Caco-2 (cell line): ENCODE measurements at regions of chr12 and their contacts with region 1.

Region 1: DNA sequence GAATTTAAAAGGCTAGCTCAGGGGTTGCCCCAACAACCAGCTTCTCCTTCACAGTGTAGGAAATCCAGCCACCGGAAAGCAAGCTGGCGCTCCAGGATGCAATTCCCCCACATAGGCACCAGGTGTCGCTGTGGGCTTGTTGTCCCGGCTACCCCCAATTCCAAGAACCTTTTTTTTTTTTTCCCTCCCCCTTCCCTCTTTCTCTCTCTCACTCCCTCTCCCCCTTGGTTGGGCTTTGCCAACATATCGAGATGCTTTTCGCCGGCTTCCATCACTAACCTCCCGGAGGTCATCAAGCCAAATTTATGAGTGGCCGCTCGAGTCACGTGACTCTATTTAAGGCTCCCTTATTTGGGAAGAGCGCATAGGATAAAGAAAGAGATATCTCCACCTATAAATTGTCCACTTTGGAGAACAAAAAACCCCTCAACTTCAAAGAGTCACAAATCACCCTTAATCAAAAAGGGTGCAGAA is at the start of gene HOXC5:
- DNase-seq: peak; percentile 83 to 86
- H3K4me3 ChIP-seq: peak within 1 kb of the TSS; percentile 52
- H3K4me3 Mint-ChIP-seq: peak within 1 kb of the TSS; percentile 89
- H3K27ac Mint-ChIP-seq: peak within 1 kb of the TSS; percentile 90
- H3K4me1 ChIP-seq: peaks cover 9% of the 10 kb centered on the region
- H3K4me1 Mint-ChIP-seq: peaks cover 10% of the 10 kb centered on the region
- H3K27me3 ChIP-seq: no peaks in the 10 kb centered on the region
- H3K27me3 Mint-ChIP-seq: no peaks in the 10 kb centered on the region
- CTCF ChIP-seq: peak; percentile 96 to 97
- total RNA-seq, gene HOXC5: 3.4 and 3.6 TPM in 2 replicates

Region 2: DNA sequence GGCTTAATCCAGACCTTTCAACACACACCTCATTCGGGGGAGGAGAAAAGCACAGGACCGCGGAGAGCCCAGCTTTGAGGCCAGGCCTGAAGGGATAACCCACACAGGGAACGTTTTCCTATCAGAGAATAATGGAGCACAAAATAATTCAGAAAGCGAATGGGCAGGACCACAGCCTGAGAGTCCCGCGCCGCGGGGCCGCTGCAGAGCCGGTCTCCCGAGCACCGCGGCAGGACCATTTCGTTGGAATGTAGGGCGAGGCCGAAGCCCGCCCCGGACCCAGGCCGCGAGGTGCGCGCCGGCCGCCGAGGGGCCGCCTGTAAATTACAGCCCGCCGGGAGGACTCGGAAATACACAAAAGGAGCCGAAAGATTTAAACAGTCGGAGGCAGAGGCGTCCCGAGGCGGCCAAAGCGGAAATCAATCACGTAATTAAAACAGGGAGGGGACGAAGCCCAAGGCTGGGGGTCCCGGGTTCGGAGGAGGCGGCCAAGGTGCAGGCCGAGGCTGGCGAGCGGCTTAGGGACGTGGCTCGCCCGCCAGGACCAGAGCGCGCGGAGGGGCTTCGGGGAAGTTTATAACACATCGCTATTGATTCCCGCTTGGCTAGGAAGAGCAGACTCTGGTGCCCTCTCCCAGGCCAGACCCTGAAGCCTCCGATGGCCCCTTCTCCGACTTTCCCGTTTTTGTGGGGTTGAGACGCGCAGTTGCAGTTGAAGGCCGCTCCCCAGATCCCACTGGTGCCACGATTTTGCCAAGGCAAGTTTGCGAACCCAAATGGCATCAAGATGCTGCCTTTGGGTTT is 14.7 kb after region 1 on chr12:
- CTCF ChIA-PET with region 1: no interaction called
- POLR2A ChIA-PET with region 1: no interaction called
- intact Hi-C with region 1: no loop called
- DNase-seq: no peak
- H3K4me3 ChIP-seq: no peak overlapping the region
- H3K4me3 Mint-ChIP-seq: peak overlapping the region; percentile 55
- H3K27ac Mint-ChIP-seq: no peak overlapping the region
- H3K4me1 ChIP-seq: no peaks in the 10 kb centered on the region; the same call in none of the 2 replicates
- H3K4me1 Mint-ChIP-seq: peaks cover 29% of the 10 kb centered on the region
- H3K27me3 ChIP-seq: no peaks in the 10 kb centered on the region
- H3K27me3 Mint-ChIP-seq: no peaks in the 10 kb centered on the region
- CTCF ChIP-seq: no peak

Region 3: DNA sequence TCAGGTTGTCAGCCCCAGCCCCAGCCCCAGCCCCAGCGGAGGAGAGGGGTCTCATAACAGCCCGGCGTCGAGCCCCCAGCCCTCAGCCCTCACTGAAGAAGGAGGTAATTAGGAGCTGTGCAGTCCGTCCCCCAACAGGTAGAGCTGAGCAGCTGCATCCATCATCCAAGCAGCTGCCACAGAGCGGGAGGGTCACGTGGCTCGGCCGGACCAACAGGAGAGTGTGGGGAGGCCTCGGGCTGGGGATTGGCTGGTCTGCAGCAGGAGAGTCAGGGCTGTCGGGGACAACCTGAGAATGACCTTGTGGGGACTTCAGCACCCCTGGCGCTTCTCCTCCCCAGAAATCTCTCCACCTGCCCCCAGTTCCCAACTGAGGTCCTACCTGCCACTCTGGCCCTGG is 126.5 kb after region 1 on chr12:
- CTCF ChIA-PET with region 1: interaction called, 10 read pairs
- POLR2A ChIA-PET with region 1: no interaction called
- intact Hi-C with region 1: no loop called
- DNase-seq: peak; percentile 81 to 86
- H3K4me3 ChIP-seq: no peak overlapping the region
- H3K4me3 Mint-ChIP-seq: peak overlapping the region; percentile 44
- H3K27ac Mint-ChIP-seq: peak overlapping the region; percentile 37
- H3K4me1 ChIP-seq: peaks cover 18% of the 10 kb centered on the region
- H3K4me1 Mint-ChIP-seq: peaks cover 11% of the 10 kb centered on the region
- H3K27me3 ChIP-seq: no peaks in the 10 kb centered on the region
- H3K27me3 Mint-ChIP-seq: no peaks in the 10 kb centered on the region
- CTCF ChIP-seq: peak in 1 of 2 experiments; percentile 39

Region 4: DNA sequence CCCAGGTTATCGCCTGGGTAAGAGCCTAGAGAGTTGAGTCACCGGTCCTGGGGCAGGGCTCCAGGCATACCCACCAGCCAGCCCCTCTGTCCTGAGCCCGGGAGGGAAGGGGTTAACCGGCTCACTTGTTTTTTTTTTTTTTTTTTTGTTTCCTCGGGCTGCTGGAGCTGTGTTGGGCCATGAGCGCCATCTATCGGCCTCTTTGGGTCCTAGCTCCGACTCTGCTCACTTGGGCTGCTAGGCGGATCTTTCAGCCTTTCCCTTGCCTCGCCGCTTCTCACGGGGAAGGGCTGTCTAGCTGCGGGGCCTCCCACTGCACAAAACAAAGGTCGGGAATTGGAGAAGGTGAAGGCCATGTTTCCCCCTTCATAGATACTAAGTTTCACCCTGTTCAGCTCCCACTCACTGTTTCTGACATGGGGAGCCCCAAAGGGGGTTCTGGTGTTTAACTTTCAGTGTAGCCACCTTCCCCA is 158.9 kb after region 1 on chr12:
- CTCF ChIA-PET with region 1: interaction called, 65 read pairs
- POLR2A ChIA-PET with region 1: interaction called, 5 read pairs
- intact Hi-C with region 1: loop called (anchors 1 kb)
- DNase-seq: peak; percentile 86 to 87
- H3K4me3 ChIP-seq: no peak overlapping the region
- H3K4me3 Mint-ChIP-seq: no peak overlapping the region
- H3K27ac Mint-ChIP-seq: no peak overlapping the region
- H3K4me1 ChIP-seq: peaks cover 37% of the 10 kb centered on the region
- H3K4me1 Mint-ChIP-seq: peaks cover 16% of the 10 kb centered on the region
- H3K27me3 ChIP-seq: no peaks in the 10 kb centered on the region
- H3K27me3 Mint-ChIP-seq: no peaks in the 10 kb centered on the region
- CTCF ChIP-seq: peak; percentile 74 to 80

Region 5: GRCh38 chr12:54201001-54201794 is 168.5 kb after region 1 on chr12:
- CTCF ChIA-PET with region 1: interaction called, 67 read pairs
- POLR2A ChIA-PET with region 1: interaction called, 3 read pairs
- intact Hi-C with region 1: loop called (anchors 1 kb)
- DNase-seq: peak; percentile 84 to 90
- H3K4me3 ChIP-seq: no peak overlapping the region
- H3K4me3 Mint-ChIP-seq: no peak overlapping the region
- H3K27ac Mint-ChIP-seq: no peak overlapping the region
- H3K4me1 ChIP-seq: no peaks in the 10 kb centered on the region
- H3K4me1 Mint-ChIP-seq: peaks cover 8% of the 10 kb centered on the region
- H3K27me3 ChIP-seq: no peaks in the 10 kb centered on the region
- H3K27me3 Mint-ChIP-seq: no peaks in the 10 kb centered on the region
- CTCF ChIP-seq: peak; percentile 93 to 97

Region 6: DNA sequence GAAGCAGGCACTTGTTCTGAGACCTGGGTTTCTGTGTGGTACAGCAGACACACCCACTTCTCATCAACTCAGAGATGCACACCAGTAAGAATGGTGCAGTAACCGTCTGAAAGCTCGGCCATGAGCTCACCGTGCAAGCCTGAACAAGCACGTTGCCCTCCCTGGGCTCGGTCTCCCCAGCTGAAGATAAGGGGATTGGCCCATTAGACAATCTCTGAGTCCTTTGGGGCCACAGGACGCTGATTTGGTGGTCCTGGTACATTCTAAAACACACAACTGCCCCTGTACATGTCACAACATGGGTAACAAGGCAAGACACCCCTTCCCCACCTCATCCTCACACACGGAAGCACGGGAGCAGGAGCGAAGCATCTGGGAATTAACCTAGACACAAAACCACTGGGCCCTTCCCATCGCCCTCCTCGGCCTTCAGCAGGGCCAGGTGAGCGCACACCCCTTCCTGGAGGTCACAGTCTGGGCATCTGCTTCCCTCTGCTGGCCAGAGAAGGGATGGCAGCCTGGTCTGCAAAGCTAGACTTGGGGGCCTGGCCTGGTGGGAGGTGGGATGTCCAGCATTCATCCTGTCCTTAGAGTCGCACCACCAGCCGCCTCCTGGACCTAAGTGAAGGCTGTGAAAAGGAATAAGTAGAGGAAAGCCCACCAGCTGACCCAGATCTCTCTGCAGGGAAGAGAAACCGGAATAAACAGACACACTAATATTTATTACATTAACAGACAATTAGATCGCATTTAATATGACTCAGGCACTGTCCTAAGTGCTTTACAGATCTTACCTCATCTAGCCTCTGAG is 175.0 kb after region 1 on chr12:
- CTCF ChIA-PET with region 1: interaction called, 25 read pairs
- POLR2A ChIA-PET with region 1: no interaction called
- intact Hi-C with region 1: loop called (anchors 1 kb)
- DNase-seq: peak; percentile 86 to 91
- H3K4me3 ChIP-seq: no peak overlapping the region
- H3K4me3 Mint-ChIP-seq: no peak overlapping the region
- H3K27ac Mint-ChIP-seq: no peak overlapping the region
- H3K4me1 ChIP-seq: peaks cover 7% of the 10 kb centered on the region; the same call in 1 of the 2 replicates
- H3K4me1 Mint-ChIP-seq: peaks cover 7% of the 10 kb centered on the region
- H3K27me3 ChIP-seq: no peaks in the 10 kb centered on the region
- H3K27me3 Mint-ChIP-seq: no peaks in the 10 kb centered on the region
- CTCF ChIP-seq: peak; percentile 92 to 94

Region 7: GRCh38 chr12:54259194-54260011 is 226.7 kb after region 1 on chr12:
- CTCF ChIA-PET with region 1: no interaction called
- POLR2A ChIA-PET with region 1: no interaction called
- intact Hi-C with region 1: no loop called
- DNase-seq: peak; percentile 80 to 84
- H3K4me3 ChIP-seq: peak overlapping the region; percentile 35
- H3K4me3 Mint-ChIP-seq: peak overlapping the region; percentile 63
- H3K27ac Mint-ChIP-seq: peak overlapping the region; percentile 86
- H3K4me1 ChIP-seq: peaks cover 22% of the 10 kb centered on the region
- H3K4me1 Mint-ChIP-seq: peaks cover 15% of the 10 kb centered on the region
- H3K27me3 ChIP-seq: no peaks in the 10 kb centered on the region
- H3K27me3 Mint-ChIP-seq: no peaks in the 10 kb centered on the region
- CTCF ChIP-seq: no peak